T-cell (primary cell): ENCODE measurements at regions of chr2 and their contacts with region 1.

Region 1: DNA sequence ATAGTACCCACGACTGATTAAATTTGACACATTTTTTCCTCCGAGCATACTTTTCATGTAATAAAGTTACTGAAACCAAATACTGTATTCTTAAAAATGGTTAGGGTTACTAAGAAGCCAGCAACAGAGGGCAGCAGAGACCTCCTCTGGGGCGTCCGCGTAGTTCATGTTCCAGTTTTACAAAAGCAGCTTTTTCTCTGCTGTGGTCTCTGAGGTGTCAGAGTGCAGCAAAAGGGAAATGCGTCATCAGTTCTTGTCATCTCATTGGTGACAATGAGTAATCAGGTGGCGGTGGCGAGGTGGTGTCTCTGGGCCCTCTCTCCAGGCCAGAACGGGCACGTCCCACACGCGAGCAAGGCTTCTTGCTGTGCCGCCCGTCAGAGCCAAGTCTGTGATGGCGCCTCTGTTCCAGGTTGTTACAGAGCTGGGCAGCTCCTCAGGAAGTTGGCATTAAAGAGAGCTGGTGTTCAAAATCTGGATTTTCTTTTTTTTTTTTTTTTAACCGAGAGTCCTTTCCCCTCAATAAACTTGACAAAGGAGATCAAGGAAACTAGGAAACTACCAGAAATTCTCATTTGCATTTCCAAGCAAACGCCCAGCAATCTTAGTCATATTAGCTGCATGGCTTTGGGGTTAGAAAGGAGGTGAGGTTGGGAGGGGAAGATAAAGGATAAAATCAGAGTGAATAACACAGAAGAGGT is 98.6 kb upstream of the BZW1 start:
- DNase-seq: peak; percentile 72 to 96 (median 91)
- ATAC-seq: peak; percentile 98 to 100 (median 100)
- H3K4me3 ChIP-seq: peak overlapping the region; percentile 26 to 41
- H3K4me3 Mint-ChIP-seq: peak overlapping the region; percentile 60 to 71 (median 64)
- H3K27ac ChIP-seq: peak overlapping the region; percentile 97
- H3K27ac Mint-ChIP-seq: peak overlapping the region; percentile 98 to 99
- H3K4me1 ChIP-seq: peaks cover 2 to 9% of the 10 kb centered on the region in 2 experiments
- H3K4me1 Mint-ChIP-seq: peaks cover 8 to 15% (median 13%) of the 10 kb centered on the region in 3 donors
- H3K27me3 ChIP-seq: no peaks in the 10 kb centered on the region
- H3K27me3 Mint-ChIP-seq: peaks cover 0 to 6% of the 10 kb centered on the region in 2 donors

Region 2: GRCh38 chr2:200735061-200735460 is 21.9 kb after region 1 on chr2:
- CTCF ChIA-PET with region 1: interaction called in 1 of 2 experiments, 14 read pairs
- POLR2A ChIA-PET with region 1: no interaction called
- DNase-seq: no peak
- ATAC-seq: no peak
- H3K4me3 ChIP-seq: no peak overlapping the region
- H3K4me3 Mint-ChIP-seq: no peak overlapping the region
- H3K27ac ChIP-seq: no peak overlapping the region
- H3K27ac Mint-ChIP-seq: no peak overlapping the region
- H3K4me1 ChIP-seq: no peaks in the 10 kb centered on the region
- H3K4me1 Mint-ChIP-seq: peaks cover 0 to 4% (median 3%) of the 10 kb centered on the region in 3 donors
- H3K27me3 ChIP-seq: peaks cover 0 to 5% of the 10 kb centered on the region in 2 experiments
- H3K27me3 Mint-ChIP-seq: peaks cover 7 to 19% of the 10 kb centered on the region in 2 donors

Region 3: GRCh38 chr2:200811336-200812121 is 98.4 kb after region 1 on chr2 and contains the start of gene BZW1:
- CTCF ChIA-PET with region 1: interaction called in 1 of 2 experiments, 10 read pairs
- POLR2A ChIA-PET with region 1: interaction called, 5 to 6 read pairs
- DNase-seq: peak; percentile 92 to 97 (median 96)
- ATAC-seq: peak; percentile 84 to 92 (median 87)
- H3K4me3 ChIP-seq: peak within 1 kb of the TSS; percentile 87 to 90
- H3K4me3 Mint-ChIP-seq: peak within 1 kb of the TSS; percentile 98 to 100 (median 98)
- H3K27ac ChIP-seq: peak within 1 kb of the TSS; percentile 99
- H3K27ac Mint-ChIP-seq: peak within 1 kb of the TSS; percentile 96 to 99
- H3K4me1 ChIP-seq: peaks cover 19 to 26% of the 10 kb centered on the region in 2 experiments
- H3K4me1 Mint-ChIP-seq: peaks cover 44 to 50% (median 50%) of the 10 kb centered on the region in 3 donors
- H3K27me3 ChIP-seq: no peaks in the 10 kb centered on the region
- H3K27me3 Mint-ChIP-seq: no peaks in the 10 kb centered on the region
- total RNA-seq, gene BZW1: 132 to 258 (median 139) TPM

Region 4: GRCh38 chr2:200888704-200889625 is 175.8 kb after region 1 on chr2 and contains the starts of genes NIF3L1 and PPIL3:
- CTCF ChIA-PET with region 1: interaction called in 1 of 2 experiments, 10 read pairs
- POLR2A ChIA-PET with region 1: interaction called in 1 of 2 experiments, 7 read pairs
- DNase-seq: peak; percentile 91 to 99 (median 96)
- ATAC-seq: peak; percentile 81 to 86 (median 82)
- H3K4me3 ChIP-seq: peak within 1 kb of the TSS; percentile 60 to 67
- H3K4me3 Mint-ChIP-seq: peak within 1 kb of the TSS; percentile 94 to 97 (median 96)
- H3K27ac ChIP-seq: peak within 1 kb of the TSS; percentile 89
- H3K27ac Mint-ChIP-seq: peak within 1 kb of the TSS; percentile 95 to 99
- H3K4me1 ChIP-seq: peaks cover 15 to 31% of the 10 kb centered on the region in 2 experiments
- H3K4me1 Mint-ChIP-seq: peaks cover 46 to 62% (median 55%) of the 10 kb centered on the region in 3 donors
- H3K27me3 ChIP-seq: no peaks in the 10 kb centered on the region
- H3K27me3 Mint-ChIP-seq: no peaks in the 10 kb centered on the region
- total RNA-seq, gene NIF3L1: 11.7 to 29.7 (median 25.0) TPM
- total RNA-seq, gene PPIL3: 28.0 to 44.2 (median 30.6) TPM